CD14-positive monocyte (primary cell): ENCODE measurements at regions of chr18 and their contacts with region 1.

Region 1: GRCh38 chr18:45839414-45840395 is 14.2 kb downstream of the SIGLEC15 start:
- DNase-seq: peak in 2 of 3 donors; percentile 34 to 38
- H3K4me3 ChIP-seq: no peak overlapping the region
- H3K4me3 Mint-ChIP-seq: peak overlapping the region; percentile 47 to 73
- H3K27ac ChIP-seq: no peak overlapping the region
- H3K27ac Mint-ChIP-seq: no peak overlapping the region
- H3K4me1 ChIP-seq: peaks cover 18 to 40% of the 10 kb centered on the region in 2 donors
- H3K4me1 Mint-ChIP-seq: peaks cover 31% of the 10 kb centered on the region
- H3K27me3 ChIP-seq: peaks cover 13 to 22% of the 10 kb centered on the region in 2 donors
- H3K27me3 Mint-ChIP-seq: peaks cover 17 to 35% (median 22%) of the 10 kb centered on the region in 3 donors
- CTCF ChIP-seq: peak; percentile 55

Region 2: DNA sequence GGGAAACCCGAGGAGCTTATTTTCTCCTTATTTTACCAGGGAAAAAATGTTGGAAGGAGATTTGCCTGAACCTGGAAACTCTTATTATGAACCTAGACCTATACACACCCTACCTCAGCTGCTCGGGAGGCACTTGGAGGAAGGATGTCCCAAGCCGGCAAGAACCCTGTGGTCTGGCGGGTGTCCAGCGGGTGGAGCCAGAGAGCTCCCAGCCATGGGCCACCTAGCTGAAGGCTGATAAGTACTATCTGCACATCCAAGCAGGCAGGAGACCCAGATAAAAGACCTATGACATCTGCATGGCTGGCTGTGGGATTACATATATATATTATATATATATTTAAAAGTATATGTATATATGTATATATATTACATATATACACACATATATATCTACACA is 116.8 kb before region 1 on chr18:
- intact Hi-C with region 1: loop called (anchors 2 to 5 kb)
- DNase-seq: peak; percentile 56 to 69 (median 62)
- H3K4me3 ChIP-seq: no peak overlapping the region
- H3K4me3 Mint-ChIP-seq: no peak overlapping the region
- H3K27ac ChIP-seq: no peak overlapping the region
- H3K27ac Mint-ChIP-seq: no peak overlapping the region
- H3K4me1 ChIP-seq: no peaks in the 10 kb centered on the region
- H3K4me1 Mint-ChIP-seq: peaks cover 2% of the 10 kb centered on the region
- H3K27me3 ChIP-seq: no peaks in the 10 kb centered on the region
- H3K27me3 Mint-ChIP-seq: peaks cover 0 to 2% (median 2%) of the 10 kb centered on the region in 3 donors
- CTCF ChIP-seq: peak; percentile 94

Region 3: GRCh38 chr18:45775241-45775676 is 64.4 kb before region 1 on chr18:
- intact Hi-C with region 1: loop called (anchors 5 to 10 kb)
- DNase-seq: peak; percentile 72 to 82 (median 79)
- H3K4me3 ChIP-seq: peak overlapping the region; percentile 51 to 86 (median 63)
- H3K4me3 Mint-ChIP-seq: peak overlapping the region; percentile 88 to 94
- H3K27ac ChIP-seq: peak overlapping the region; percentile 71 to 84
- H3K27ac Mint-ChIP-seq: peak overlapping the region; percentile 82 to 93 (median 87)
- H3K4me1 ChIP-seq: peaks cover 5 to 9% of the 10 kb centered on the region in 2 donors
- H3K4me1 Mint-ChIP-seq: peaks cover 13% of the 10 kb centered on the region
- H3K27me3 ChIP-seq: peaks cover 3 to 4% of the 10 kb centered on the region in 2 donors
- H3K27me3 Mint-ChIP-seq: peaks cover 10 to 28% (median 14%) of the 10 kb centered on the region in 3 donors
- CTCF ChIP-seq: no peak